A549 (cell line): ENCODE measurements at regions of chr6 and their contacts with region 1.

Region 1: GRCh38 chr6:137866914-137867684 is at the start of gene TNFAIP3:
- DNase-seq: peak; percentile 74 to 87
- ATAC-seq: peak; percentile 85 to 93
- H3K4me3 ChIP-seq: peak within 1 kb of the TSS; percentile 62
- H3K27ac ChIP-seq: peak within 1 kb of the TSS; percentile 79 to 97
- H3K4me1 ChIP-seq: peaks cover 11% of the 10 kb centered on the region
- CTCF ChIP-seq: peak; percentile 81
- EP300 ChIP-seq: no peak
- POLR2A ChIP-seq: no peak
- RAD21 ChIP-seq: peak; percentile 21 to 82; a peak in 4 of 5 replicates
- polyA plus RNA-seq, gene TNFAIP3: 8.5 and 18.3 TPM in 2 replicates

Region 2: GRCh38 chr6:137707590-137708360 is 159.3 kb before region 1 on chr6:
- CTCF ChIA-PET with region 1: interaction called, 37 read pairs
- POLR2A ChIA-PET with region 1: interaction called, 6 read pairs
- DNase-seq: peak; percentile 23 to 79
- ATAC-seq: peak; percentile 62 to 68
- H3K4me3 ChIP-seq: no peak overlapping the region
- H3K27ac ChIP-seq: peak overlapping the region; percentile 65; a peak in 4 of 6 replicates
- H3K4me1 ChIP-seq: peaks cover 5% of the 10 kb centered on the region; the same call in 2 of the 3 replicates
- CTCF ChIP-seq: peak; percentile 72
- EP300 ChIP-seq: no peak
- POLR2A ChIP-seq: no peak
- RAD21 ChIP-seq: peak; percentile 80 to 87

Region 3: DNA sequence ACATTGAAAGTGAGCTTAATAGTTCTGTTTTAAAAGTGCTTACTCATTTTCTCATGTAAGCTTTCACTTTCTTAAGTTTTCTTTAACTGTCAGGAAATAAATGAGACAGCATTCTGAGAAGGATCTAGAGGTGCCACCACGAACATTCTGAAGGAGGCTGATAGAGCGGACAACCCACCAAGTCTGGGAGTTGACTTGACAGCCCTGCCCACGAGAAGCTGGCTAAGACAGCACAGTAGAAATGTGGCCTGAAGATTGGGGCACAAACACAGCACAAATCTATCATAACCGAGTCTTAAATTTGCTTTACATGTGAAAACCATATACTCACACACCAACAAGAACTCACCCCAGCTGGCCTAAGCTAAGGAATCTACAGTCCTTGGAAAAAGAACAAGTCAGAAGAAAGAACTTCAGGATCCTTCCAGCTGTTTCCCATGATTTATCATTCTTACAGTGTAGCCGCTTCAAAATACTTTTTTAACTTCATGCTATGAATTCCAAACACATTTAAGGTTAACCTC is 144.3 kb before region 1 on chr6:
- CTCF ChIA-PET with region 1: interaction called, 13 read pairs
- POLR2A ChIA-PET with region 1: interaction called, 5 read pairs
- DNase-seq: no peak
- ATAC-seq: no peak
- H3K4me3 ChIP-seq: no peak overlapping the region
- H3K27ac ChIP-seq: peak overlapping the region in 1 of 2 experiments; percentile 16; a peak in 1 of 6 replicates
- H3K4me1 ChIP-seq: no peaks in the 10 kb centered on the region; the same call in 2 of the 3 replicates
- CTCF ChIP-seq: no peak
- EP300 ChIP-seq: no peak
- POLR2A ChIP-seq: no peak
- RAD21 ChIP-seq: no peak

Region 4: DNA sequence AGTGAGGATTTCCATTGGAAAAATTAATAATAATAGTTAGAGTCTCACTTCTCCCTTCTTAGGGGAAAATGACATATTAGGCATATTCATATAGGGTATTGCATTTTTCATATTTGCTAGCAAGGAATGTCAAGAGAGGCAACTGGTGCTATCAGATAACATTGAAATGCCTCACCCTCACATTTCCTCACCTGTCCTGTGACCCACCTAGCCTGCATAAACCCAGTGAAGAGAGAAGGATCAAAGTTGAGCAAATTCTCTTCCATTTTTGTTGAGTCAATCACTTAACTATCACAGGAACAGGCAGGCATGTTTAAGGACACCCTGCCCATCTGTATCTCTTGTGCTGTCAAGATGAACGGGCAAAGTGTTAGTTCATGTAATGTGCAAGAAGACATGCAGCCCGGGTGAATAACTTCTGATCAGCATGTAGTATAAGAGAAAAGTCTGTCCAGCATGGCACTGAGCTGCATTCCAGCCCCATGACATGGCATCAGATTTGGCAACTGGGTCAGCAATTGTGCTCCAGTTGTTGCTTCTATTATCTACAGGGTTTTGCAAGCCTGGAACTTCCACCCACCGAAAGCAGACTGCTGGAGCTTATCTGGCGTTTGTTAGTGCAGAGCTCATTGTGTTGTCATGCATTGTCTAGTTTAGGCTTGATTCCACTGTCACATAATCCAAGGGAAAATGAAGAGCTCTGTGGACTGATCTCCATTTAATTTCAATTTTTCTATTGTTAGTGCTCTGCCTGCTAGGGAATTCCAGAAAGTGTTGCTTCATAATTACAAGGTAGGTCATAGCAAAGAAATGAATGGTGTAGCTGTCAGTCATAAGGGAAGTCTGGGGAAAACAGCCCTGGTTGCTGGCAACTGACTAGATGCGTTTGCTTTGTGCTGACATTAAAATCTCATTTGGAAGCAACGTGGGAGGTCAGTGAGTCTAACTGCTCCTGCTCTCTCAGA is 138.4 kb before region 1 on chr6:
- CTCF ChIA-PET with region 1: interaction called, 13 read pairs
- POLR2A ChIA-PET with region 1: interaction called, 5 read pairs
- DNase-seq: peak in 1 of 2 experiments; percentile 25
- ATAC-seq: peak; percentile 74 to 75
- H3K4me3 ChIP-seq: no peak overlapping the region
- H3K27ac ChIP-seq: peak overlapping the region; percentile 55 to 84
- H3K4me1 ChIP-seq: peaks cover 42% of the 10 kb centered on the region
- CTCF ChIP-seq: no peak
- EP300 ChIP-seq: no peak
- POLR2A ChIP-seq: no peak
- RAD21 ChIP-seq: no peak

Region 5: DNA sequence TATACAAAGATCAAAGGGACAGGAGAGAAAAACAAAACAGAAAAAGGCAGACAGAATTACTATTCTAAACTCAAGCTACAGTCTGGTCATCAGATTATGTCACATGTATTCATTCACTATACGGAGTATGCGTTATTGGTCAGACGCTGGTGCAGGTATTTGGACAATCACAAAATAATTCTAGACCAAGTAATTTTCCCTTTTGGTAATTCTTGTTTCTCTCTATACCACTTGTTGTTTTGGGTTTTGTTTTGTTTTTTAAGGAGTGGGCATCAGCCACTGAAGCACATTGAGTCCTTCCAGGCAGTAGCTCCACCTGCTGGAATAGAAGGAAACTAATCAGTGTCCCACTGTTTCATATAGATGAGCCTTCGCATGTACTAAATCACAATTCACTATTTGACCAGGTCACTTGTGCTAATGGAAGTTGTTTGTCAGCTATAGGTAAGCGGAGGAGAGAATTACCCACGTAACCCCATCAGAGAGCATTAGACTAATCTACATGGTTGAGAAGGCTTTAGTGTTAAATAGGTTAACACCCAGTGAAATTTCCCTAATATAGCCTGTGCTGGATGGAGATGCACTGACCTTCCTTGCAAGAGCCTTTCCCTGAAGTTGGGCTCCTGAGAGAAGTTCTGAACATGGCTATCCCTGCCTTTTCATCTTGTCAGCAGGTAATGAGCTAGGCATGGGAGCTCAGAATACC is 77.8 kb after region 1 on chr6:
- CTCF ChIA-PET with region 1: interaction called, 24 read pairs
- POLR2A ChIA-PET with region 1: no interaction called
- DNase-seq: peak; percentile 14 to 18
- ATAC-seq: peak; percentile 70 to 87; a peak in 5 of 6 replicates
- H3K4me3 ChIP-seq: no peak overlapping the region
- H3K27ac ChIP-seq: no peak overlapping the region
- H3K4me1 ChIP-seq: no peaks in the 10 kb centered on the region
- CTCF ChIP-seq: peak; percentile 56
- EP300 ChIP-seq: no peak
- POLR2A ChIP-seq: no peak
- RAD21 ChIP-seq: peak; percentile 61 to 62